ENCODE measurements at regions of chr14 and their contacts with region 1.

Region 1: DNA sequence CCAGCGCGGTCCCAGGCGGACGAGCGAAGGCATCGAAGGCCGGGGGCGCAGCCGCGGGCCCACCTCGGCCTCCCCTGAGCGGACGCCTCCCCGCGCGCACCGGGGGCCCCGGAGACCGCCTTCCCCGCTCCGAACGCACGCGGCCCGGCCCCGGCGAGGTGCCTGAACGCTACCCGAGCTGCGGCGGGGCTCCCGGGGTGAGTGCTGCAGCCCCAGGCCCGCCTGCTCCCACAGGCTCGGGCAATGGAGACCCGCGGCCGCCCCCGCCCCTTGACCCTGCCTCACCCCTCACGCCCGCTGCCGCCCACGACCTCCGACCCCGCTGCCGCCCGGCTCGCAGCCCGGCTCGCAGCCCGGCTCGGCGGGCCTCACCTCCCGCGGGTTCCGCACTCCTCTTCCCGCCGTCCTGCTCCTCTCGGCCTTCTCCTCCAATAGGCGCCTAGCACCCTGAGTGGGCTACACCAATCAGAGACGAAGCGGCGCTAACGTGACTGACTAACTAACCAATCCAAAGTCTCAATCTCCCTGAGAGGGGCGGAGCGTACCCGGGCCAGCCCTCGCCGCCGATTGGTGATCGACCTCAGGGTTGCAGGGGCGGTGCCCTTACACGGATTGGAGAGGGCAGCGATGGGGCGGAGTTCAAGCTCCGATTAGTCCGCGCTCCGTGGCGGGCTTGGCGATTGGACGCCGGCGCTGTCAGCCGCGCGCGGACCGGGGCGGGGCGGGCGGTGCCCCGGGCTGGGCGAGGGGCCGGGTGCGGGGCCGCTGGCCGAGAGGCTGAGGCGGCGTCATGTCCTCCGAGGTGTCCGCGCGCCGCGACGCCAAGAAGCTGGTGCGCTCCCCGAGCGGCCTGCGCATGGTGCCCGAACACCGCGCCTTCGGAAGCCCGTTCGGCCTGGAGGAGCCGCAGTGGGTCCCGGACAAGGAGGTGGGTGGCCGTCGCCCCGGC is at the starts of genes XRCC3 and ZFYVE21:
- DNase-seq: peak; percentile 99

Region 2: DNA sequence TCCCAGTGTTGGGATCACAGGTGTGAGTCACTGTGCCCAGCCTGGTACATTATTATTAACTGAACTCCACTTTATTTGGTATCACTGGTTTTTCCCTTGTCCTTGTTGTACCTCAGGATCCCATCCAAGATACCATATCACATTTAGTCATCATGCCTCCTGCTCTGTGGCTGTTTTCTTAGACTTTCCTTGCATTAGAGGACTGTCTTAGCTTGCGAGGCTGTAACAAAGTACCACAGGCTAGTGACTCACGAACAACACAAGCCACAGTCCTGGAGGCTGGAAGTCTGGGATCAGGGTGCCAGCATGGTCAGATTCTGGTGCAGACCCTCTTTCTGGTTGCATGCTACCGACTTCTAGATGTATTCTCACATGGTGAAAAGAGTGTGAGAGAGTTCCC is 74.1 kb before region 1 on chr14:
- CTCF ChIA-PET with region 1: no interaction called
- POLR2A ChIA-PET with region 1: no interaction called
- DNase-seq: no peak

Region 3: DNA sequence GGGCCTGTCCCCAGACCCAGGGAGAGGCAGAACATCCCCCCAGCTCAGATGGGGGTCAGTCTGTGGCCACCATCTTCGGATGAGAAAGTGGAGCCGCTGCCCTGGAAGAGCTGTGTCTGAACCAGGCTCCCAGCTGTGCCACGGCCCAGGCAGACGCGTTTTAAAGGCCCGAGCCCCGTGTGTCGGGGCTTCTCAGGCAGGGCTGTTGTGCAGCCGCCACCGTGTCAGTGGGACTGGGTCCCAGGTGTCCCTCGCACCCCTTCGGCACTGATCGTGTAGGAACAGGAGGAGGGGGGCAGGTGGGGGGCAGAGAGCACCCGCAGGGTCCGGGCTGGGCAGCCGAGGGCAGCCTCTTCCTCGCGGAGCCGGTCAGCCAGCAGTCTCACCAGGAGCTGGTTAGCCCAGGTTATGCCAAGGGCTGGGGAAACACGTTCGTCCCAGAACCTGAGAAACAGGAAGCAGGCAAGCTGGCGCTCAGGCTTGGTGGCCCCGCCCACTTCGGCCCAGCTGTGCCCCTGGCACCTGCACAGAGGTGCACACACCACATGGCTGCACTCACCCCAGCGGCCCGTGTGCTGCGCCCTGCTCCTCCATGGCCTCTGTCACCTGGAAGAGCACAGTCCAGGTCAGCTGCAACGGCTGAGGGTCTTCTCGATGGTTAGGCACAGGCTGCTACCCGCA is 16.6 kb before region 1 on chr14:
- CTCF ChIA-PET with region 1: no interaction called
- POLR2A ChIA-PET with region 1: interaction called, 13 read pairs
- DNase-seq: no peak

Region 4: DNA sequence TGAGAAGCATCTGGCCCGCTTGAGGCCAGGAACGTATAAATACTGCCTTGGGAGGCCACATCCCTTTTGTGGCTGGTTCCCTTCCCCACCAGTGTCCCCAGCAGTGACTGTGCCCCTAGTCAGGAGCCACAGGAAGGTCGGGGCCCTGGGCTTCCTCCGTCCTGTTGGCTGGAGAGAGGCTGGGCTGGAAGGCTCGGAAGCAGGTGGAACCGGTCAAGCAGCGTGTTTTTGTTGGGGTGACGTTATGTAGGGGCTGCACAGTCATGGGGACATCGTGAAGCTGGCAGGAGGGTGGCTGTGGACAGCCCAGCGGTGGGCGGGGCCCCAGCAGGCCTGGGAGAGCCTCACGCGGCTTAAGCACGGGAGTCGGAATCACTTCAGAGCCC is 10.2 kb before region 1 on chr14:
- CTCF ChIA-PET with region 1: no interaction called
- POLR2A ChIA-PET with region 1: interaction called, 13 read pairs
- DNase-seq: no peak

Region 5: DNA sequence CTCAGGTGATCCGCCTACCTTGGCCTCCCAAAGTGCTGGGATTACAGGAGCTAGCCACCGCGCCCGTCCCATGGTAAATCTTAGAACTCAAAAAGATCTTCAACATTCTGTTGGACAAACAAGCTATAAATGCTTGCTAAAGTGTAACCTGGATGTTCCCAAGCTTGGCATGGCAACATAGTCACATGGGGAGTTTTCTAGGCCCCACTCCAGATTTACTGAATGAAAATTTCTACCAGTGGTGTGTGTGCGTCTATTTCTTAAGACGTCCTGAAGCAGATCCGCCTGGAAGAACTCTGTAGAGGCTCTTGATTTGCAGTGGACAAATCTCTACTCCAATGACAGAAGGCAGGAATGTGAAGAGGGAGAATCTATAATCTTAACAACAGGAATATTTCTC is 60.2 kb after region 1 on chr14:
- CTCF ChIA-PET with region 1: no interaction called
- POLR2A ChIA-PET with region 1: no interaction called
- DNase-seq: no peak

Measured in HEK293T (cell line).